ENCODE measurements at regions of chr5 and their contacts with region 1.

Region 1: GRCh38 chr5:132064738-132065331 is 4.4 kb downstream of the IL3 start:
- DNase-seq: peak; percentile 90

Region 2: GRCh38 chr5:132500931-132501630 is 436.2 kb after region 1 on chr5:
- in situ Hi-C with region 1: loop called (anchors 25 kb)
- DNase-seq: peak; percentile 74

Measured in KBM-7 (cell line).